ENCODE measurements at regions of chr1 and their contacts with region 1.

Region 1: DNA sequence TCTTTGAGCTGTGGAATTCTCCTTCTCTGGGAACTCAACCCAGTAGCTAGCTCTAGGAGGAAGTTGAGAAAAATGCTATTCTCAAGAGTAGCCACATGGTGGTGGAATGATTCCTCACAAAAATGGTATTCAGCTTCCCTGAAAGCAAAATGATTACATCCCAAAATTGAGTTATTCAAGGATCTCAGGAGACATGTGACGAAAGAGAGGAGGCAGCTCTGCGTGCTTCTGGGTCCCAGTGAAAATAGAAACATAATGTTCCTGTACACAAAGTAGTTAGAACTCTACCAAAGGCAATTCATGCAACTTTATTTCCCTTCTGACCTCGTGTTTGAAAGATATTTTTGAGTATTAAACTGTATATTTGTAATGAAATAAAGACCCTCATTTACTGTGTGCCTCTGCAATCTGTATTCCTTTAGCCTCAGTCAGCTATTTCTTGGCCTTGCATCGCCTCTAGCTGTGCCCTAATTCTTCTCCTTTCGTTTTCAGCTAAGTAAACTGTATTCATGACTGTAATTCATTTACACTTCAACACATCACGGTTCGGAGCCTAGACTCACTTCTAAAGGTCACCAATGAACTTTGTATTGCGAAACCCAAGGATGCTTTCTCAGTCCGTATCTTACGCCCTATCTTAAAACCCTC is 167.3 kb downstream of the FASLG start:
- DNase-seq: peak in 1 of 5 donors; percentile 15
- H3K4me3 ChIP-seq: no peak overlapping the region
- H3K4me3 Mint-ChIP-seq: no peak overlapping the region
- H3K27ac ChIP-seq: no peak overlapping the region
- H3K27ac Mint-ChIP-seq: no peak overlapping the region
- H3K4me1 ChIP-seq: peaks cover 24% of the 10 kb centered on the region
- H3K4me1 Mint-ChIP-seq: no peaks in the 10 kb centered on the region
- H3K27me3 ChIP-seq: no peaks in the 10 kb centered on the region
- H3K27me3 Mint-ChIP-seq: no peaks in the 10 kb centered on the region

Region 2: GRCh38 chr1:172778456-172779455 is 47.5 kb before region 1 on chr1:
- CTCF ChIA-PET with region 1: no interaction called
- POLR2A ChIA-PET with region 1: no interaction called
- intact Hi-C with region 1: loop called (anchors 2 kb)
- DNase-seq: peak in 4 of 5 donors; percentile 19 to 37 (median 28)
- H3K4me3 ChIP-seq: no peak overlapping the region
- H3K4me3 Mint-ChIP-seq: peak overlapping the region; percentile 42 to 83 (median 62)
- H3K27ac ChIP-seq: no peak overlapping the region
- H3K27ac Mint-ChIP-seq: peak overlapping the region in 4 of 7 donors; percentile 27 to 54 (median 40)
- H3K4me1 ChIP-seq: peaks cover 11% of the 10 kb centered on the region
- H3K4me1 Mint-ChIP-seq: peaks cover 7 to 18% (median 14%) of the 10 kb centered on the region in 4 donors
- H3K27me3 ChIP-seq: no peaks in the 10 kb centered on the region
- H3K27me3 Mint-ChIP-seq: no peaks in the 10 kb centered on the region

Region 3: GRCh38 chr1:172851077-172851476 is 24.9 kb after region 1 on chr1:
- CTCF ChIA-PET with region 1: no interaction called
- POLR2A ChIA-PET with region 1: no interaction called
- intact Hi-C with region 1: no loop called
- DNase-seq: no peak
- H3K4me3 ChIP-seq: no peak overlapping the region
- H3K4me3 Mint-ChIP-seq: no peak overlapping the region
- H3K27ac ChIP-seq: no peak overlapping the region
- H3K27ac Mint-ChIP-seq: peak overlapping the region in 1 of 7 donors; percentile 25
- H3K4me1 ChIP-seq: peaks cover 2% of the 10 kb centered on the region
- H3K4me1 Mint-ChIP-seq: peaks cover 3 to 10% (median 5%) of the 10 kb centered on the region in 4 donors
- H3K27me3 ChIP-seq: no peaks in the 10 kb centered on the region
- H3K27me3 Mint-ChIP-seq: no peaks in the 10 kb centered on the region

Region 4: GRCh38 chr1:172895050-172895460 is 68.8 kb after region 1 on chr1:
- CTCF ChIA-PET with region 1: interaction called, 18 read pairs
- POLR2A ChIA-PET with region 1: interaction called, 8 read pairs
- intact Hi-C with region 1: no loop called
- DNase-seq: peak in 4 of 5 donors; percentile 26 to 45 (median 38)
- H3K4me3 ChIP-seq: peak overlapping the region; percentile 12 to 52
- H3K4me3 Mint-ChIP-seq: peak overlapping the region; percentile 64 to 88 (median 79)
- H3K27ac ChIP-seq: peak overlapping the region; percentile 19
- H3K27ac Mint-ChIP-seq: peak overlapping the region; percentile 70 to 96 (median 84)
- H3K4me1 ChIP-seq: peaks cover 29% of the 10 kb centered on the region
- H3K4me1 Mint-ChIP-seq: peaks cover 26 to 31% (median 28%) of the 10 kb centered on the region in 4 donors
- H3K27me3 ChIP-seq: no peaks in the 10 kb centered on the region
- H3K27me3 Mint-ChIP-seq: no peaks in the 10 kb centered on the region

Region 5: GRCh38 chr1:173095632-173096031 is 269.4 kb after region 1 on chr1:
- CTCF ChIA-PET with region 1: no interaction called
- POLR2A ChIA-PET with region 1: no interaction called
- intact Hi-C with region 1: loop called (anchors 10 kb)
- DNase-seq: no peak
- H3K4me3 ChIP-seq: no peak overlapping the region
- H3K4me3 Mint-ChIP-seq: no peak overlapping the region
- H3K27ac ChIP-seq: no peak overlapping the region
- H3K27ac Mint-ChIP-seq: no peak overlapping the region
- H3K4me1 ChIP-seq: no peaks in the 10 kb centered on the region
- H3K4me1 Mint-ChIP-seq: peaks cover 0 to 1% (median 0%) of the 10 kb centered on the region in 4 donors
- H3K27me3 ChIP-seq: no peaks in the 10 kb centered on the region
- H3K27me3 Mint-ChIP-seq: no peaks in the 10 kb centered on the region

Region 6: DNA sequence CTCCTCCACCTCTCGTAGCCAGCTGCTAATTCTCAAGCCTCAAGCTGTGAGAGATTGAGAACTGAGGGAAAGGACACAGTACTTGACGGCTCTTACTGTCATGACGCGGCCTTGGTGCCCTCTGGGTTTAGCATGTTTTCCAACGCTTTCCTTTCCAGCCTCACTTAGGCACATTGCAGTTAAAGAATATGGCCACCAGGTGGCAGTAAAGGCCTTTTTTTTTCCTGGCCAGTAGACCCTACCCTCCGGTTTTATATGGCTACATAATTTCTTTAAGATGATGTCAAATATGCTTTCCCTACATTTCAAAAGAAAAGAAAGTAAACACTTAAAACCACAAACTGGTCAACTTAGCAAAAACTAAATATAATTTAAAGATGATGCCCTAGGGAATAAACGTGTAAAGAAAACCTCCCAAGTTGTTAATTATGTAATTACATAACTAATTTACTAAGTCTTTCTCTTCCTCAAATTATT is 594.1 kb after region 1 on chr1:
- CTCF ChIA-PET with region 1: interaction called, 4 read pairs
- POLR2A ChIA-PET with region 1: no interaction called
- intact Hi-C with region 1: loop called (anchors 1 kb)
- DNase-seq: peak; percentile 64 to 72 (median 65)
- H3K4me3 ChIP-seq: no peak overlapping the region
- H3K4me3 Mint-ChIP-seq: peak overlapping the region in 1 of 8 donors; percentile 61
- H3K27ac ChIP-seq: no peak overlapping the region
- H3K27ac Mint-ChIP-seq: peak overlapping the region in 4 of 7 donors; percentile 2 to 77 (median 42)
- H3K4me1 ChIP-seq: peaks cover 7% of the 10 kb centered on the region
- H3K4me1 Mint-ChIP-seq: peaks cover 3 to 7% (median 6%) of the 10 kb centered on the region in 4 donors
- H3K27me3 ChIP-seq: no peaks in the 10 kb centered on the region
- H3K27me3 Mint-ChIP-seq: no peaks in the 10 kb centered on the region